CD4-positive, alpha-beta memory T cell (primary cell): ENCODE measurements at regions of chr21 and their contacts with region 1.

Region 1: DNA sequence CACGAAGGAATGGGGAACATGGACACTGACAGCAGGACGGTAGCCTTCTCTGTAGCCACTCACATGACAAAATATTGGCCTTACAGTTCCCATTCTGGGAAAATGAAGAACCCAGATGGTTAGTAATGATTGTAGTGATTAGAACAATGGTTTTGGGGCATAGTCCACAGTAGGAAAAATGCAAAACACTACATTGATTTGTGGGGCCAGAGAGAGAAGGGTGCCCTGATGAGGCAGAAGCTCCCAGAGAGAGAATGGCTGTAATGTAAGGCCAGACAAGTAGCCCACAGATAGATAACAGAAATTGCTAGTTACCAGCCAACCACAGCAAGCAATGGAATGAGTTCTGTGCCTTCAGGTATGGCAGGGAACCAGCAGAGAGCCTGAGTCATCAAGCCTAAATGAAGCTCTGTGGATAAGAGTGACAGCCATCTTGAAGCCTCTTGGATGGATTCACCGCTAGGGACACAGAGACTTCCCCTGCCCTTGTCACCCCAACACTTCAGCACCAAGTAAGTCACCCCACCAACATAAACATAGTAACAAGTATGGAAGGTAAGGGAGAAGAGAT is 206.1 kb downstream of the BACH1 start:
- DNase-seq: no peak
- H3K4me3 ChIP-seq: no peak overlapping the region
- H3K4me3 Mint-ChIP-seq: no peak overlapping the region
- H3K27ac ChIP-seq: no peak overlapping the region
- H3K27ac Mint-ChIP-seq: no peak overlapping the region
- H3K4me1 ChIP-seq: no peaks in the 10 kb centered on the region
- H3K4me1 Mint-ChIP-seq: peaks cover 0 to 8% (median 5%) of the 10 kb centered on the region in 4 donors
- H3K27me3 ChIP-seq: no peaks in the 10 kb centered on the region
- H3K27me3 Mint-ChIP-seq: no peaks in the 10 kb centered on the region

Region 2: DNA sequence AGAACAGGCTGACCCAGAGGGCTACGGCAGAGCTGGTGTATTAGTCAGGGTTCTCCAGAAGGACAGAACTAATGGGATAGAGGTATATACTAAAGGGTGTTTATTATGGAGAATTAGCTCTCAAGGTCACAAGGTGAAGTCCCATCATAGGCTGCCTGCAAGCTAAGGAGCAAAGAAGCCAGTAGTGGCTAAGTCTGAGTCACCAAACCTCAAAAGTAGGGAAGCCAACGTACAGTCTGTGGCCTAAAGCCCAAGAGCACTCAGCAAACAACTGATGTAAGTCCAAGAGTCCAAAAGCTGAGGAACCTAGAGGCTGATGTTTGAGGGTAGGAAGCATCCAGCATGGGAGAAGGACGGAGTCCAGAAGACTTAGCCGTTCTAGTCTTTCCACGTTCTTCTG is 26.9 kb before region 1 on chr21:
- CTCF ChIA-PET with region 1: interaction called, 19 read pairs
- POLR2A ChIA-PET with region 1: no interaction called
- intact Hi-C with region 1: no loop called
- DNase-seq: no peak
- H3K4me3 ChIP-seq: no peak overlapping the region
- H3K4me3 Mint-ChIP-seq: no peak overlapping the region
- H3K27ac ChIP-seq: no peak overlapping the region
- H3K27ac Mint-ChIP-seq: no peak overlapping the region
- H3K4me1 ChIP-seq: no peaks in the 10 kb centered on the region
- H3K4me1 Mint-ChIP-seq: peaks cover 0 to 15% (median 3%) of the 10 kb centered on the region in 4 donors
- H3K27me3 ChIP-seq: no peaks in the 10 kb centered on the region
- H3K27me3 Mint-ChIP-seq: no peaks in the 10 kb centered on the region